ENCODE measurements at regions of chr18 and their contacts with region 1.

Region 1: GRCh38 chr18:12516049-12516630 is 108.4 kb downstream of the PRELID3A start:
- DNase-seq: no peak
- ATAC-seq: no peak
- H3K4me3 ChIP-seq: no peak overlapping the region
- H3K4me3 Mint-ChIP-seq: no peak overlapping the region
- H3K27ac ChIP-seq: no peak overlapping the region
- H3K27ac Mint-ChIP-seq: no peak overlapping the region
- H3K4me1 ChIP-seq: no peaks in the 10 kb centered on the region
- H3K4me1 Mint-ChIP-seq: no peaks in the 10 kb centered on the region
- H3K27me3 ChIP-seq: no peaks in the 10 kb centered on the region
- H3K27me3 Mint-ChIP-seq: peaks cover 2% of the 10 kb centered on the region
- CTCF ChIP-seq: no peak

Region 2: DNA sequence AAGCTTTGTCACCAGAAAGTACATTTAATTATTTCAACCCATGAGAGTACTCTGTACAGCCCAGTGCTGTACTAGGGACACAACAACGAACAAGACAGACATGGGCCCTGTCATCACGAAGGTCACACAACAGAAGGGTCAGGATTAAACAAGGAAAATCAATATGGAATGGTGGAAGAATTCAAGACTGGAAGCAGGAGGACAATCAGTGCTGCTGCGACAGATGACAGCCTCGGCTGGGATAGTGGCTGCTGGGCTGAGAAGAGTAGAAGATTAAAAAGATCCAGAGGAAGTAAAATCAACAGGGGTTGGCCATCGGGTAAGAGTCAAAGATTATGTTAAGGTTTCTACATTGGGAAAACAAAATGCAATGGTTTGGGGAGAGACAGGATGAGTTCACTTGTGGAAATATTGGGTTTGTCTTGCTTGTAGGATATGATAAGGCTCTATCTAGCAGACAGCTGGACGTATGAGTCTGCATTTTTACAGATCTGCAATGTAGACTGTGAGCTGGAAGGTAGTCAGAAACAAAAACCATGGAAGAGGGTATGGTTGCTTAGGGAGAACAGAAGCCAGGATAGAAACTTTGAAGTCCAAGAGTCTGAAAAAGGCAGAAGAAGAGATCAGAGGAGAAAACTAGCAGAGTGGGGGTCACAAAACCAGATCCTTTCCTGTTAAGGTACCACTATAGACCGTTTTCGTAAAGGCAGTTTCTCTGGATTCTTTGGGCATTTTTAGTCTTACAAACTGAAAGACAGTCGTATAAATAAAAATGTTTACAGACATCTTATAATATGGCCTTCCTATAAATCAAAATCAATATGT is 24.3 kb before region 1 on chr18:
- CTCF ChIA-PET with region 1: no interaction called
- POLR2A ChIA-PET with region 1: no interaction called
- intact Hi-C with region 1: loop called in 1 of 2 experiments (anchors 2 kb)
- DNase-seq: no peak
- ATAC-seq: no peak
- H3K4me3 ChIP-seq: no peak overlapping the region
- H3K4me3 Mint-ChIP-seq: no peak overlapping the region
- H3K27ac ChIP-seq: no peak overlapping the region
- H3K27ac Mint-ChIP-seq: no peak overlapping the region
- H3K4me1 ChIP-seq: no peaks in the 10 kb centered on the region
- H3K4me1 Mint-ChIP-seq: no peaks in the 10 kb centered on the region
- H3K27me3 ChIP-seq: no peaks in the 10 kb centered on the region
- H3K27me3 Mint-ChIP-seq: no peaks in the 10 kb centered on the region
- CTCF ChIP-seq: no peak

Measured in CD8-positive, alpha-beta T cell (primary cell).